ENCODE measurements at regions of chr5 and their contacts with region 1.

Region 1: DNA sequence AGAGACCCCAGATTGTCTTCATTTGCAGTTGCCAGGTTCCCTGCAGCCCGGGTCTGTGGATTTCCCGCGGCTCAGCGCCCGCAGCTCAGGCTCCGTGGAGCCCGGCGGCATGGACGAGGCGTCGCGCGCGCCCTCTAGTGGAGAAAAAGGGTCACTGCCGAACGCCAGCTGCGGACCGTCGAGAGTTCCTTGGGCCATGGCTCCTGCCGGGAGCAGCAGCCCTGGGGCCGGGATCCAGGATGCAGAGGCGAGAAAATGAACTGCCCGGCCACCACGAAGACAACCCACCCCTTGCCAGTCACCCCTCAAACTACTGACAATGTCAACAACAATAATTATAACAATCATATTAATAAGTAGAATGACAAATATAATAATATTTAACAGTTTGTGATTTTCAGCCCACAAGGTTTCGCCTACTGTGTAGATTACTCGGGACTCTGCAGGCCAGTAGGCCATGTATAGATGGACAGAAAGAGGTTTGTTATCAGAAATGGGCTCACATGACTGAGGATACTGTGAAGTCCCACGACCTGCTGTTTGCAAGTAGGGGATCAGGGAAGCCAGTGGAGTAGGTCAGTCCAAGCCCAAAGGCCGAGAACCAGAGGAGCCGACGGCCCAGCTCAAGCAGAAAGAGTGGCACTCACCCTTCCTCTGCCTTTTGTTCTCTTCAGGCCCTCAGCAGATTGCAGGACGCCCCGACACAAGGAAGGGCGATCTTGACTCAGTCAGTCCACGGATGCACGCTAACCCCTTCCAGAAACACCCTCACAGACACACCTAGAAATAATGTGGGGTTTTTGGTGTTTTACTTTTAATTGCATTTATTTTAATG is 43.1 kb downstream of the BOD1 start:
- DNase-seq: peak; percentile 49
- ATAC-seq: peak; percentile 99
- H3K4me3 ChIP-seq: no peak overlapping the region
- H3K27ac ChIP-seq: no peak overlapping the region; the same call in 1 of the 2 replicates
- H3K4me1 ChIP-seq: peaks cover 3% of the 10 kb centered on the region; the same call in 1 of the 2 replicates
- H3K27me3 ChIP-seq: no peaks in the 10 kb centered on the region
- CTCF ChIP-seq: peak; percentile 92
- POLR2A ChIP-seq: no peak
- RAD21 ChIP-seq: peak; percentile 93

Region 2: DNA sequence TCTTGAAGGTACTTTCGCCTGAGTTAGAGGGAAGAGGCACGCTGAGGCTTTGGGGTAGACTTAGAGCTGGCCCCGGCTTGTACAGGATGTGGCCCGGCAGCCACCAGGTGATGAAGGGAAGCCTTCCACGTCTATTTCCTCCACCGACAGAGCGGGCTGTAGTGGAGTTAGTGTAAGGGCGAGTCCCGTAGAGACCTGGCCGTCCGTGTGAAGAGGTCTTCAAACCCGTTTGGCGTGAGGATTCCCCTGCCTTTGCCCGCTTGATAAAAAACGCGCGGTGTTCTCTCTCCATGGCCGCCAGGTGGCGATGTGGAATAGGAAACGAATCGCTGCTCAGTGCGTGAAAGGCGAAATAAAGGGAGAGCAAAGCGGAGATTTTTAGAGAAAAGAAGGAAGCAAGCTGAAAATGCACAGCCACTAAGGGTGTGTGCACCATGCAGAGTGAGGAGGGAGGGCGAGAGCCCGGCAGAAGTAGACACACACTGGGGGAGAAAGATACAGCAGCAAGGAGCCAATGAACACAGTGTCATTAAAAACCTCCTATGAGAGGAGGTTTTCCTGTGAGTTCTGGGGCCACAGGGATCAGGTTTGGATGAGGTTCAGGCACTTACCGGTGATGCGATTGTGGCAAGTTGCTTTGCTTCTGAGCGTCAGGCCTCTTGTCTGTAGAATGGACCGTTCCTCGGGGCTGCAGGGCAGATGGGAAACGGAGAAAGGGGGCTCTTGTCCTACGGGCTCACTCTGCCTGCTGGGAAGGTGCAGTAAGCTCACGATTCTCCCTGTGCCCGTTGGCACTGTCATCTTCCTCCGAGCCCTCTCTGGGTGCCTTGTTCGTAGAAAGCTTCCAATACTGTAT is 279.3 kb before region 1 on chr5:
- CTCF ChIA-PET with region 1: interaction called, 5 read pairs
- POLR2A ChIA-PET with region 1: no interaction called
- dilution Hi-C with region 1: no loop called
- in situ Hi-C with region 1: loop called (anchors 5 kb)
- intact Hi-C with region 1: loop called (anchors 1 kb)
- DNase-seq: peak; percentile 80
- ATAC-seq: peak; percentile 84
- H3K4me3 ChIP-seq: no peak overlapping the region
- H3K27ac ChIP-seq: peak overlapping the region; percentile 29
- H3K4me1 ChIP-seq: peaks cover 17% of the 10 kb centered on the region
- H3K27me3 ChIP-seq: no peaks in the 10 kb centered on the region; the same call in 1 of the 2 replicates
- CTCF ChIP-seq: peak; percentile 96
- POLR2A ChIP-seq: peak; percentile 55; the same call in 1 of the 2 replicates
- RAD21 ChIP-seq: peak; percentile 96

Region 3: DNA sequence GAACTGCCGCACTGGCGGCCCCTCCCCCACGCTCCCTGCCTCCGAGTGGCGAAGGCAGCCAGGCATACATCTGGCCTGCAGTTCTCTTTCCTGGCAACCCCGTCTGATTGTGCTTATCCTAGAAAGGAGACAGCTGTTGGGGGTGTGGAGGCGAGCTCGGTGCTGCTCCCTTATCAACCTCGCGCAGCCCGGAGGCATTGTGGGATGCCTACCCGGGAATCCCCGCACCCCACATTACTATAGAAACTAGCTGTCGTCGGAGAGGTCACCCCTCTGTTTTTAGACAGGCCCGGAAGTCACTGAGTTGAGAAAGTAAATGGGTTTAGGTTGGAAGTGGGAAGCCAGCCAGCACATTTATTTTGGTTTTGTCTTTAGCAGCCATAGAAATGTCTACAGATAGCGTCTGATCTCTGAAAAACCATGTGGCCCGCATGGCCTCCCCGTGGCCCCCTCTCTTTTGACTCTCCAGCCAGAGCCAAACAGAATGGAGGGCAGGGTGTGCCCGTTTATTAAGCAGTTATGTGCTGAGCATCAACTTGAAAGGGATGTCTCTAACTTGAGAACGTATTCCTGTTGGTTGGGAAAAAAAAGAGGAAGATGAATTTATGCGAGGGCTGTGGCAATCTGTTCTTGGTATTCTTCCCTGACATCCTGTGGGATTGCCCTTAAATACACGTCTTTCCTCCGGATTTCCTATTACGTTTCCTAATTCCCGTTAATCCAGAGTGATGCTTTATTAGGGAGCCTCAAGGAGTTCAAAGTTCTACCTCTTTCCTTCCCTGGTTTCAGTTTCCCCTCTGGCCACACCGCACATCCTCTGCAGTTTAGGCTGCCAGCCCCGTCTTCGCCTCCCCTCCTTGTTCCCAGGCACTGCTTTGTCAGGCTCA is 249.0 kb before region 1 on chr5:
- CTCF ChIA-PET with region 1: interaction called, 3 read pairs
- POLR2A ChIA-PET with region 1: no interaction called
- dilution Hi-C with region 1: no loop called
- in situ Hi-C with region 1: no loop called
- intact Hi-C with region 1: loop called (anchors 1 kb)
- DNase-seq: peak; percentile 89
- ATAC-seq: peak; percentile 16
- H3K4me3 ChIP-seq: peak overlapping the region; percentile 89
- H3K27ac ChIP-seq: peak overlapping the region; percentile 73
- H3K4me1 ChIP-seq: peaks cover 42% of the 10 kb centered on the region
- H3K27me3 ChIP-seq: no peaks in the 10 kb centered on the region
- CTCF ChIP-seq: no peak
- POLR2A ChIP-seq: peak; percentile 25
- RAD21 ChIP-seq: peak; percentile 5; the same call in 1 of the 2 replicates

Region 4: DNA sequence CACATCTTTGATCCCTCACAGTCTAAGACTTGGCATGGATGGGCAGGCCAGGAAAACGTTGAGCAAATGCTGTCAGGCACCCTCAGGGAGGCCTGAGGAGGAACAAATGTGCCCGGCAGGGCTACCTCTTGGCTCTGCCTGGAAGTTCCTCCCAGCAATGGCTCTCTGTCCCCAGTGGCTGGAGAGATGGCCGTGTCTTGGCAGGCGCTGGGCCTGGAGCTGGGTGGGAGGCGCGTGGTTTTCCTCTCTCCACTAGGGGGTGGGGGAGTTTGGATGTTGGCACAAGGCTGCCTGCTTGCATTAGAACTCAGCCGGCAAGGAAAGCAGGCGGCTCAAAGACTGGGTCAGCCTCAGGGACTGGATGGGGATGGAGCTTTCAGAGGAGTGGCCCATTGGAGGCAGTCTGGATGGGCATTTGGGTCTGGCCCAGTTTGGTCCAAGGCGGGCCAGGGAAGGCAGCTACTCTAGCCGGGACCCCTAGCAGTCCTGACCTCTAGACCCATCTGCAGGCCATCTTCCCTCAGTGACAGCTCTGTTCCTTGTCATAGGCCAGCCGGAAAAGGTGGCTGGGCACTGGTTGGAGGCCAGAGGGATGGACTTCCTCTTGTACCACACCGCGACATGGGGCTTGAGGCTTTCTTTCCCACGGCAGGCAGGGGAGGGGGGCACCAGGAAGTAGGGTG is 176.9 kb before region 1 on chr5:
- CTCF ChIA-PET with region 1: interaction called, 5 read pairs
- POLR2A ChIA-PET with region 1: no interaction called
- dilution Hi-C with region 1: no loop called
- in situ Hi-C with region 1: no loop called
- intact Hi-C with region 1: loop called (anchors 1 kb)
- DNase-seq: no peak
- ATAC-seq: no peak
- H3K4me3 ChIP-seq: no peak overlapping the region
- H3K27ac ChIP-seq: 0 out of 2 replicates have a peak overlapping the region, but pooled peaks have one; percentile 7
- H3K4me1 ChIP-seq: peaks cover 13% of the 10 kb centered on the region
- H3K27me3 ChIP-seq: no peaks in the 10 kb centered on the region
- CTCF ChIP-seq: no peak
- POLR2A ChIP-seq: no peak
- RAD21 ChIP-seq: no peak

Region 5: DNA sequence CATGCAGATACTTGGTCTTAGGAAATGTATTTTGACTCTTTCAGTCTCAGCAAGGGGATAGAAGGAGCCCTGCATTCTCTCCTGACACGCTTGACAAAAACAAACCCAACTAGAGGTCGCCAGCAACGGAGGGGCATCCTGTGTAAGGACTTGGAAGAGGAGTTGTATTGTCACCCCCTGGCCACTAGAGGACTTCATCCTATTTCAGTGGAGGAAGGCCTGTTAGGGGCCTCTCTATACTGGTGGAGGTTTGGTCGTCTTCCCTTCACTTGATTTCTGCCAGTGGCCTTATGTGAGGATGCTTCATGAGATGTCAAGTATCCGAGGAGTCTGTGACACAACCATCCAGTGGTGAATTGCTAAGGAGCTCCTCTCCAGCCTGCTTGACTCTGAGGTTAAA is 122.3 kb before region 1 on chr5:
- CTCF ChIA-PET with region 1: interaction called, 8 read pairs
- POLR2A ChIA-PET with region 1: no interaction called
- dilution Hi-C with region 1: no loop called
- in situ Hi-C with region 1: no loop called
- intact Hi-C with region 1: loop called (anchors 2 kb)
- DNase-seq: peak; percentile 28
- ATAC-seq: no peak
- H3K4me3 ChIP-seq: no peak overlapping the region
- H3K27ac ChIP-seq: peak overlapping the region; percentile 69
- H3K4me1 ChIP-seq: peaks cover 30% of the 10 kb centered on the region
- H3K27me3 ChIP-seq: no peaks in the 10 kb centered on the region
- CTCF ChIP-seq: peak; percentile 27; the same call in 1 of the 2 replicates
- POLR2A ChIP-seq: no peak
- RAD21 ChIP-seq: no peak; the same call in 1 of the 2 replicates

Region 6: DNA sequence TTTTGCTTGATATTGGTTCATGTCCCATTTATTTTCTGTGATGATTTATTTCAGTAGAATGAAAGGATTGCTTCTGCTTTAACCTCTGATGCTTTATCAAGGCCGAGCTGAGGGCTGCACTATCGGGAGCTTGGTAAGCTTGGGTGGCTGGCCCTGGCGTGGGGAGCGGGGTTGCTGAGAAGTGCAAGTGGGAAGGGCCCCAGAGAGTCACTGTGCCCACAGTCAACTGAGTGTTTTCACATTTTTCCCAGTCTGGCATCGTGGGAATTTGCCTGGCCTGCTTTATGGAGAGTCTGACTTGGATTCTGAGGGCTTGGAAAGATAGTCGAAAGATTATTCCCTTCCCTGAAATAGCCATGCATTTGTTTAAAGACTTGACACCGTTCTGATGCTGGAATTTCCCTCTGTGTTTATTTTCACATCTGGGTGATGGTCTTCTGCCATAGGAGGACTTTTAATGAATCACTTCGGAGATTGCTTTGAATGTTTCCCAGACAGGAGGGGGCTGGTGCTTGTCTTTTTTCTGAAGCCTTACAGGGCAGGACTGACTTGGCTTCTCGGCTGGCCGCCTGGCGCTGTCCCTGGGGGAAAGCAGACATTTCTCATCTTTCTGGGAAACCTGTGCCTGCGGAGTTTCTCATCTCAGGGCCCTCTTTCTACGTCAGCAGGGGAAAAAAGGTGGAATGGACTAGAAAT is 95.8 kb before region 1 on chr5:
- CTCF ChIA-PET with region 1: interaction called, 3 read pairs
- POLR2A ChIA-PET with region 1: no interaction called
- dilution Hi-C with region 1: no loop called
- in situ Hi-C with region 1: no loop called
- intact Hi-C with region 1: loop called (anchors 5 kb)
- DNase-seq: peak; percentile 93
- ATAC-seq: peak; percentile 32
- H3K4me3 ChIP-seq: no peak overlapping the region
- H3K27ac ChIP-seq: peak overlapping the region; percentile 75
- H3K4me1 ChIP-seq: peaks cover 46% of the 10 kb centered on the region
- H3K27me3 ChIP-seq: no peaks in the 10 kb centered on the region
- CTCF ChIP-seq: no peak
- POLR2A ChIP-seq: no peak
- RAD21 ChIP-seq: no peak

Region 7: GRCh38 chr5:173498286-173498685 is 75.1 kb before region 1 on chr5:
- CTCF ChIA-PET with region 1: no interaction called
- POLR2A ChIA-PET with region 1: no interaction called
- dilution Hi-C with region 1: no loop called
- in situ Hi-C with region 1: no loop called
- intact Hi-C with region 1: loop called (anchors 5 kb)
- DNase-seq: peak; percentile 64
- ATAC-seq: peak; percentile 53
- H3K4me3 ChIP-seq: no peak overlapping the region
- H3K27ac ChIP-seq: peak overlapping the region; percentile 42; the same call in 1 of the 2 replicates
- H3K4me1 ChIP-seq: peaks cover 26% of the 10 kb centered on the region
- H3K27me3 ChIP-seq: no peaks in the 10 kb centered on the region
- CTCF ChIP-seq: no peak
- POLR2A ChIP-seq: no peak
- RAD21 ChIP-seq: no peak

Measured in IMR-90 (cell line).